K562 (cell line): ENCODE measurements at regions of chr16 and their contacts with region 1.

Region 1: DNA sequence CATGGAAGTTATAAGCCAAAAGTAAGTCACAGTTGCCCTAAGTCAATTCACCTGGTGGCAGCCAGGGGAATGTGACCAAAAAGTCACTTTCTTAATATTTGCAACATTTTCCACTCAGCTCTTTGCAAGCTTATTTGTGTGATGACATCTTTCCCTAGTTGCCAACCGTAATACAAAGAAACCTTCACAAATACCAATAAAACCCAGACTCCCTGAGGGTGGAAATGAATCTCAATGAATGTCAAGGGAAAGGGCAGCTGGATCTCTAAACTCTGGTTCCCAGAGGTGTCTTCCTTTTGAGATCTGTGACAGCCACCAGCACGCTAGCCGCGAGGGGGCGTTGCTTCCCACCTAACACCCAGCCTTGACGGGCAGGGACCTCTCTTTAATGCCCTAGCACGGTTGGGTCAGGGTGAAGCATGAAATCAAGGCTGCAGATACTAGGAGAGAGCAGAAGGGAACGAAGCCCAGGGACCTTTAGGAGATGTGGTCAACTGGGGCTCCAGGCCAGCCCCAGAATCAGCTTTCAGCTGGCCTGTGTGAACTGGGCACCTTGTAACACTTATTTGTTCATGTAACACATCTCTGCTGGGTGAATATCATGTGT is 82.2 kb downstream of the CMC2 start:
- DNase-seq: peak; percentile 56 to 72 (median 62)
- ATAC-seq: peak; percentile 97
- H3K4me3 ChIP-seq: no peak overlapping the region
- H3K27ac ChIP-seq: no peak overlapping the region
- H3K4me1 ChIP-seq: no peaks in the 10 kb centered on the region
- H3K27me3 ChIP-seq: peaks cover 6 to 9% of the 10 kb centered on the region in 2 experiments; a peak in 4 of 5 replicates
- CTCF ChIP-seq: peak; percentile 77 to 90 (median 88)
- EP300 ChIP-seq: no peak
- POLR2A ChIP-seq: no peak
- RAD21 ChIP-seq: peak in 1 of 2 experiments; percentile 76; a peak in 2 of 4 replicates

Region 2: GRCh38 chr16:80948886-80949493 is 24.5 kb after region 1 on chr16:
- CTCF ChIA-PET with region 1: interaction called, 6 read pairs
- POLR2A ChIA-PET with region 1: no interaction called
- in situ Hi-C with region 1: no loop called
- intact Hi-C with region 1: loop called (anchors 2 kb)
- DNase-seq: peak; percentile 67 to 81 (median 73)
- ATAC-seq: peak; percentile 100
- H3K4me3 ChIP-seq: no peak overlapping the region
- H3K27ac ChIP-seq: no peak overlapping the region
- H3K4me1 ChIP-seq: no peaks in the 10 kb centered on the region; a peak in 1 of 5 replicates
- H3K27me3 ChIP-seq: peaks cover 20 to 22% of the 10 kb centered on the region in 2 experiments
- CTCF ChIP-seq: peak; percentile 83 to 96 (median 85)
- EP300 ChIP-seq: no peak
- POLR2A ChIP-seq: no peak
- RAD21 ChIP-seq: peak; percentile 15 to 72

Region 3: GRCh38 chr16:81204798-81205680 is 280.6 kb after region 1 on chr16:
- CTCF ChIA-PET with region 1: no interaction called
- POLR2A ChIA-PET with region 1: no interaction called
- in situ Hi-C with region 1: no loop called
- intact Hi-C with region 1: loop called (anchors 10 kb)
- DNase-seq: peak; percentile 52 to 65 (median 58)
- ATAC-seq: peak; percentile 82
- H3K4me3 ChIP-seq: no peak overlapping the region
- H3K27ac ChIP-seq: no peak overlapping the region
- H3K4me1 ChIP-seq: no peaks in the 10 kb centered on the region; a peak in 1 of 5 replicates
- H3K27me3 ChIP-seq: peaks cover 28 to 49% of the 10 kb centered on the region in 2 experiments; a peak in 4 of 5 replicates
- CTCF ChIP-seq: peak; percentile 75 to 76 (median 75)
- EP300 ChIP-seq: no peak
- POLR2A ChIP-seq: no peak
- RAD21 ChIP-seq: peak; percentile 50 to 63